Activated naive CD4-positive, alpha-beta T cell treated with anti-CD3 and anti-CD28 coated beads for 36 hours (primary cell): ENCODE measurements at regions of chr2 and their contacts with region 1.

Region 1: DNA sequence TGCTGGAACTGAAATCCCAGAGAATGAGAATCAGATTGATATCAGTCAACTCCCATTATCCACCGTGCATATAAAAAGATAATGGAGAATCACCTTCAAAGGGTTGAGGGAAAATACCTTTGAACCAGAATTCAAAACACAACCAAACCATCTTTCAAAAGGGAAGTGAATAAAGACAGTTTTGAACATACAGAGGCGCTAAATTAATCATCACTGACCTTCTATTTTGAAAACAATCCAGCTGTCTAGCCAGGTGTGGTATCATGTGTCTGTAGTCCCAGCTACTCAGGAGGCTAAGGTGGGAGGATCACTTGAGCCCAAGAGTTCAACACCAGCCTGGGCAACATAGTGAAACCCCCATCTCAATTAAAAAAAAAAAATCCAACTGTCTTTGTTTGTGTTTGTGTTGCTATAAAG is 63.6 kb downstream of the TRABD2A start:
- DNase-seq: peak; percentile 35
- H3K4me3 Mint-ChIP-seq: no peak overlapping the region
- H3K27ac Mint-ChIP-seq: peak overlapping the region; percentile 57
- H3K4me1 Mint-ChIP-seq: peaks cover 41% of the 10 kb centered on the region
- H3K27me3 Mint-ChIP-seq: no peaks in the 10 kb centered on the region

Region 2: DNA sequence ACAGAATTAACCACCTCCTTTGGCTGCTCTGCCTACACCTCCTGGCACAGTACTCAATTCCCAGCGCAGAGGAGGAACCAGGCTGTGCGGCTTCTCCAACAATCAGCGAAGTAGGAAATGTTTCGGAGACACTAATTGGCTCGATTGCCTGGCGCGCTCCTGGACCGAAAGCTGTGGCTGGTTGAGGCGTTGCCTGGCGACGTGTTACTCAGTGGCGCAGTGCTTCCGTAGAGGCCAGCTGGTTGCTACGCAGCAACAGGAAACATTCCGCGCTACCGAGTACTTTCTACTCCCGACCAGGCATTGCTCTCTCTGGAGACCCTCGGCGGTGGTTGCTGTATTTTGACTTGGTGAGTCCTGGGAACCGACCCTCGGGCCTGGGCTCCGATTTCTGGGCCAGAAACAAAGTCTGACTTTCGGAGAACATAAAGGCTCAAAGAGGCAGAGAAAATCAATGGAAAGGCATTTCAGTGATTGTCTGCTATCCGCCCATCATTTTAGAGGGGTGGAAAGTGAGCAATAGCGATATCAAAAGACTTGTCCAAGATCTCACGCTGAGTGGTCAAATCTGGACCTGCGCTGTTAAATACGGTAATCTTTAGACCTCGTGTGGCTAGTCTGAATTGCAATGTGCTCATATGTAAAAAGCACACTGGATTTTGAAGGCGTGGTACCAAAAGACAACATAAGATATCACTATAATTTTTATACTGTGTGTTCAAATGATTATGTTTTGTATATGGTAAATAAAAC is 300.8 kb before region 1 on chr2 and contains the start of gene DNAH6:
- CTCF ChIA-PET with region 1: no interaction called
- intact Hi-C with region 1: loop called (anchors 5 kb)
- DNase-seq: peak; percentile 94
- H3K4me3 Mint-ChIP-seq: peak within 1 kb of the TSS; percentile 85
- H3K27ac Mint-ChIP-seq: no peak within 1 kb of the TSS
- H3K4me1 Mint-ChIP-seq: peaks cover 22% of the 10 kb centered on the region
- H3K27me3 Mint-ChIP-seq: no peaks in the 10 kb centered on the region
- total RNA-seq, gene DNAH6: 0.07 to 0.62 TPM

Region 3: DNA sequence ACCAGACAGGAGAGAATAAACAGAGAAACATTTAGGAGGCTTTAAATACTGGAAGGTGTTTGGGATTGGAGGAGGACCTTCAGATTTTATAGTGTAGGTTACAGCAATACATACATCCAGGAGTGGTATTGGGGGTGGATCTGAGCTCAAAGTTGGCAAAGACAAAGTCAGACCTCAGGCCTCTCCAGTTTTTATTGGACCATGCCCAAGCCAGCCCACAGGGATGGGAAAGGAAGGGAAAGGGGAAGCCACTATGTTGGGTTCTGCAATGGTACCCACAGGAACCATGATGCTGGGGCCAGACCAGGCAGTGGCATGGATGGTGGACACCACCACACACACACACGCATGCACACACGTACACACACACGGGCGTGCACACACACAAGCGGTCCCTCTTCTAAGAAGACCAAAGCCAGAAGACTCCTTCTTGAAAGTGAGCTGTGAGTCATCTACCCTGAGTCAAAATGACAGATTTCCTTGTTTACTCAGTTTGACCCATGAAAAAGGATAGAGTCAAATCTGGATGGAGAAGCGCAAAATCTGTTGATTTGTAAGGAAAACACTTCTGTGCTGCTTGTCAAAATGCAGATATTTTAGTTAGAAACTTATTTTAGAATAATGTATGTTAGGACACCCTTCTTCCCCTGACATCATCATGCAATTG is 24.3 kb before region 1 on chr2:
- CTCF ChIA-PET with region 1: no interaction called
- intact Hi-C with region 1: no loop called
- DNase-seq: no peak
- H3K4me3 Mint-ChIP-seq: no peak overlapping the region
- H3K27ac Mint-ChIP-seq: no peak overlapping the region
- H3K4me1 Mint-ChIP-seq: peaks cover 5% of the 10 kb centered on the region
- H3K27me3 Mint-ChIP-seq: no peaks in the 10 kb centered on the region

Region 4: DNA sequence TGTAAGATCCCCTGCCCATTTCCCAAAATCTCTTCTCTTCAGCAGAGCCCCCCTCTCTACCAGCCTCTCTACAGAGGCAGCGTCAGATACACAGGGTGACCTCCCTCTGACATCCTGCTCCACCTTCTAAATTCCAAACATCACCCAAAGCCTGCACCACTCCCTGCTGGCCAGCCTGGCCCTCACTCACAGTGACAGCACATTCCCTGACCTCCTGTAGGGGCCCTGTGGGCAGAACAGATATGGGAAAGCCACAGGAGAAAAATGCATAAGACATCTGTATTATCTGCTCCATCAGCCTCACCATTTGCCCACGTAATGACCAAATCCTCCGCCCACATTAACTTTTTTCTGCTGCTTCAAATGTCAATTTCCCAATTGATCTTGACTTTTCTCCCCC is 23.1 kb after region 1 on chr2:
- CTCF ChIA-PET with region 1: interaction called, 3 read pairs
- intact Hi-C with region 1: loop called (anchors 2 kb)
- DNase-seq: no peak
- H3K4me3 Mint-ChIP-seq: peak overlapping the region; percentile 74
- H3K27ac Mint-ChIP-seq: peak overlapping the region; percentile 80
- H3K4me1 Mint-ChIP-seq: peaks cover 86% of the 10 kb centered on the region
- H3K27me3 Mint-ChIP-seq: no peaks in the 10 kb centered on the region